Heart right ventricle (tissue), 16 donors: ENCODE measurements at regions of chr1 and their contacts with region 1.

Region 1: GRCh38 chr1:218339267-218339831 is 5.8 kb upstream of the TGFB2 start:
- DNase-seq: no peak
- ATAC-seq: no peak
- H3K4me3 ChIP-seq: no peak overlapping the region
- H3K27ac ChIP-seq: no peak overlapping the region
- H3K4me1 ChIP-seq: peaks cover 0 to 5% (median 0%) of the 10 kb centered on the region in 9 donors
- H3K27me3 ChIP-seq: no peaks in the 10 kb centered on the region
- CTCF ChIP-seq: peak; percentile 48 to 90 (median 76)

Region 2: GRCh38 chr1:218521375-218522169 is 182.2 kb after region 1 on chr1:
- intact Hi-C with region 1: loop called in 6 of 10 experiments (anchors 5 to 10 kb)
- DNase-seq: peak in 1 of 2 donors; percentile 45
- ATAC-seq: peak in 4 of 8 donors; percentile 24 to 54 (median 34)
- H3K4me3 ChIP-seq: no peak overlapping the region
- H3K27ac ChIP-seq: no peak overlapping the region
- H3K4me1 ChIP-seq: peaks cover 0 to 5% (median 0%) of the 10 kb centered on the region in 9 donors
- H3K27me3 ChIP-seq: no peaks in the 10 kb centered on the region
- CTCF ChIP-seq: peak; percentile 44 to 74 (median 64)

Region 3: GRCh38 chr1:219066631-219067349 is 727.4 kb after region 1 on chr1:
- intact Hi-C with region 1: loop called in 9 of 10 experiments (anchors 2 to 10 kb)
- DNase-seq: peak in 1 of 2 donors; percentile 5
- ATAC-seq: peak in 7 of 8 donors; percentile 50 to 79 (median 71)
- H3K4me3 ChIP-seq: no peak overlapping the region
- H3K27ac ChIP-seq: peak overlapping the region in 2 of 10 donors; percentile 17 to 26
- H3K4me1 ChIP-seq: peaks cover 0 to 11% (median 6%) of the 10 kb centered on the region in 9 donors
- H3K27me3 ChIP-seq: no peaks in the 10 kb centered on the region
- CTCF ChIP-seq: peak; percentile 42 to 73 (median 59)

Region 4: GRCh38 chr1:219416594-219417238 is 1077.4 kb after region 1 on chr1:
- intact Hi-C with region 1: loop called in 5 of 10 experiments (anchors 5 to 10 kb)
- DNase-seq: peak in 1 of 2 donors; percentile 56
- ATAC-seq: peak in 5 of 8 donors; percentile 53 to 62 (median 57)
- H3K4me3 ChIP-seq: no peak overlapping the region
- H3K27ac ChIP-seq: peak overlapping the region in 1 of 10 donors; percentile 1
- H3K4me1 ChIP-seq: peaks cover 0 to 27% (median 14%) of the 10 kb centered on the region in 9 donors
- H3K27me3 ChIP-seq: no peaks in the 10 kb centered on the region
- CTCF ChIP-seq: peak in 8 of 9 donors; percentile 51 to 75 (median 62)

Region 5: DNA sequence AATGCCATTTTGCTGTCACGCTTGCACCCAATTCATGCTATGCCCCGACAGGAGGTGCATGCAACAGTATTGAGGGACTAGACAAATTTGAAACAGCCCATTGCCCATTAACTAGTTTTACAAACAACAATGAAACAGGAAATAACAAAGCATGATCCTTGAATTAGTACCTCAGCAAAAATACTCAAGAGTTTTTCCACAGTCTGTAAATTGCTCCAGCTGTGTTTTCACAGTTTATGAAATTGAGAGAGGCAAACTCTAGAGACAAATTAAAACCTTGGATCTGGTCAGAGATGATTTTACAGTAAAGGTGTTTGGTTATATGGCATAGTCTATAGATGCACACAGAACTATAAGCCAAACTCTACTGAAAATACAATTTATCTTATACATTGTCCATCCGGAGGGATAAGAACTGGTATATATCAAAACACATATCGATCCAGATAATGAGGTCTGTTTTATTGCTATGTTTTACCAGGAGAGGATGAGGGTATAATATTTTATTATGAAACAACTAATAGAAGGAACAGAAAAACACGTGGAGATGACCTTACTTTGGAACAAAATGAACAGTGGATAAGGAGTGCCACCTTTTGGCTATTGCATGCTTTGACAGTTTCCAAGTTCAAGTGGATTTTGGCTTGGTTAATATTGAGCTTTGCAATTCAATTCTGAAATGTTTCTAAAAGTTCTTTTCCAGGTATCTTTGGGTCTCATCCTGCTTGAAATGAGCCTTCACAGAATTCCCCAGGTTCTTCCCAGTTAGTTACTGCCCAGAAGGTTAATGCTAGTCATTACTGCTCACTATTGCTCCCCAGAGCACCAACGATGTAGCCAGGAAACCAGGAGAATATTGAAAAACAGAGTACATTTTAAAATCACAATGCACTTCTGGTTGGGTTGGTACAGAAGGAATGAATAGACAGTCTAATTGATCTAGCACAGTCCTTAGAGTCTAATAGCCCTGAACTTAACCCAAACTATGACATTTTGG is 1227.9 kb after region 1 on chr1:
- intact Hi-C with region 1: loop called in 7 of 10 experiments (anchors 2 to 10 kb)
- DNase-seq: peak in 1 of 2 donors; percentile 15
- ATAC-seq: peak in 7 of 8 donors; percentile 44 to 77 (median 65)
- H3K4me3 ChIP-seq: no peak overlapping the region
- H3K27ac ChIP-seq: no peak overlapping the region
- H3K4me1 ChIP-seq: peaks cover 0 to 8% (median 0%) of the 10 kb centered on the region in 9 donors
- H3K27me3 ChIP-seq: no peaks in the 10 kb centered on the region
- CTCF ChIP-seq: peak in 8 of 9 donors; percentile 19 to 71 (median 58)